Caco-2 (cell line): ENCODE measurements at regions of chr6 and their contacts with region 1.

Region 1: DNA sequence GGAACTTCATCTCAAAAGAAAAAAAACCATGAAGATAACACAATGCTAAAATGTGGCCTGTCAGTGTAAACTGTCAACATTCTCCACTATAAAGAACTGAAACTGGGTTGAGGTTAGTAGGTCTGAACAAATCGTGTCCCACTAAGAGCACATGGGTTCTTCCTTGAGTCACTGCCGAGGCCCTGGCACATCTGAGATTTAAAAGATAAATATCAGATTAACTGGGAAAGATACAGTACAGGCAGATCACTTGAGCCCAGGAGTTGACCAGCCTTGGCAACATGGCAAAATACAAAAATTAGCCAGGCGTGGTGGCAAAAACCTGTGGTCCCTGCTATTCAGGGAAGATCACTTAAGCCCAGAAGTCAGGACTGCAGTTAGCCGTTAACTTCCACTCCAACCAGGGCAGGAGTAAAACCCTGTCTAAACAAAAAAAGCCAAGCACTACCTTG is 5.6 kb downstream of the EEF1A1 start:
- DNase-seq: no peak
- H3K4me3 ChIP-seq: no peak overlapping the region
- H3K4me3 Mint-ChIP-seq: peak overlapping the region; percentile 5
- H3K27ac Mint-ChIP-seq: peak overlapping the region; percentile 61
- H3K4me1 ChIP-seq: peaks cover 3% of the 10 kb centered on the region; the same call in 1 of the 2 replicates
- H3K4me1 Mint-ChIP-seq: peaks cover 4% of the 10 kb centered on the region
- H3K27me3 ChIP-seq: no peaks in the 10 kb centered on the region
- H3K27me3 Mint-ChIP-seq: no peaks in the 10 kb centered on the region
- CTCF ChIP-seq: no peak

Region 2: DNA sequence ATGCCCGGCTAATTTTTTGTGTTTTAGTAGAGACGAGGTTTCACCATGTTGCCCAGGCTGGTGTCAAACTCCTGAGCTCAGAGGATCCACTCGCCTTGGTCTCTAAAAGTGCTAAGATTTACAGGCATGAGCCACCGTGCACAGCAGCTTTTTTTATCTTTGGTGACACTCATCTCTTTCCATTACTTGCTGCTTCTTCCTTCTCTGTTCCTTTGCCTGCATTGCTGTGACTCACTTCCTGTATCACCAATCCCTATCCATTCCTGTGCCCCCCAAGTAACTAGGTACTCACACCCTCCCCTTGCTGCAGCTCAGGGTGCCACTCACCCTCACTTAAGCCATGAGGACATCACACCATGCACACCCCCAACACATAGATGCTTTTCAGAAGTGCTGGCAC is 314.5 kb before region 1 on chr6:
- CTCF ChIA-PET with region 1: no interaction called
- POLR2A ChIA-PET with region 1: interaction called, 15 read pairs
- intact Hi-C with region 1: no loop called
- DNase-seq: no peak
- H3K4me3 ChIP-seq: no peak overlapping the region
- H3K4me3 Mint-ChIP-seq: peak overlapping the region; percentile 1
- H3K27ac Mint-ChIP-seq: no peak overlapping the region
- H3K4me1 ChIP-seq: no peaks in the 10 kb centered on the region
- H3K4me1 Mint-ChIP-seq: peaks cover 6% of the 10 kb centered on the region
- H3K27me3 ChIP-seq: no peaks in the 10 kb centered on the region
- H3K27me3 Mint-ChIP-seq: peaks cover 6% of the 10 kb centered on the region
- CTCF ChIP-seq: no peak

Region 3: GRCh38 chr6:73610444-73611275 is 95.4 kb after region 1 on chr6:
- CTCF ChIA-PET with region 1: interaction called, 7 read pairs
- POLR2A ChIA-PET with region 1: interaction called, 5 read pairs
- intact Hi-C with region 1: loop called (anchors 1 kb)
- DNase-seq: peak in 1 of 2 experiments; percentile 53
- H3K4me3 ChIP-seq: no peak overlapping the region
- H3K4me3 Mint-ChIP-seq: no peak overlapping the region
- H3K27ac Mint-ChIP-seq: no peak overlapping the region
- H3K4me1 ChIP-seq: no peaks in the 10 kb centered on the region
- H3K4me1 Mint-ChIP-seq: no peaks in the 10 kb centered on the region
- H3K27me3 ChIP-seq: no peaks in the 10 kb centered on the region
- H3K27me3 Mint-ChIP-seq: no peaks in the 10 kb centered on the region
- CTCF ChIP-seq: peak; percentile 42 to 58